Activated CD8-positive, alpha-beta memory T cell treated with anti-CD3 and anti-CD28 coated beads, Interleukin-2, amount 10 ng/mL, durations not matched to agents 7 days and 5 days (primary cell): ENCODE measurements at regions of chr1 and their contacts with region 1.

Region 1: DNA sequence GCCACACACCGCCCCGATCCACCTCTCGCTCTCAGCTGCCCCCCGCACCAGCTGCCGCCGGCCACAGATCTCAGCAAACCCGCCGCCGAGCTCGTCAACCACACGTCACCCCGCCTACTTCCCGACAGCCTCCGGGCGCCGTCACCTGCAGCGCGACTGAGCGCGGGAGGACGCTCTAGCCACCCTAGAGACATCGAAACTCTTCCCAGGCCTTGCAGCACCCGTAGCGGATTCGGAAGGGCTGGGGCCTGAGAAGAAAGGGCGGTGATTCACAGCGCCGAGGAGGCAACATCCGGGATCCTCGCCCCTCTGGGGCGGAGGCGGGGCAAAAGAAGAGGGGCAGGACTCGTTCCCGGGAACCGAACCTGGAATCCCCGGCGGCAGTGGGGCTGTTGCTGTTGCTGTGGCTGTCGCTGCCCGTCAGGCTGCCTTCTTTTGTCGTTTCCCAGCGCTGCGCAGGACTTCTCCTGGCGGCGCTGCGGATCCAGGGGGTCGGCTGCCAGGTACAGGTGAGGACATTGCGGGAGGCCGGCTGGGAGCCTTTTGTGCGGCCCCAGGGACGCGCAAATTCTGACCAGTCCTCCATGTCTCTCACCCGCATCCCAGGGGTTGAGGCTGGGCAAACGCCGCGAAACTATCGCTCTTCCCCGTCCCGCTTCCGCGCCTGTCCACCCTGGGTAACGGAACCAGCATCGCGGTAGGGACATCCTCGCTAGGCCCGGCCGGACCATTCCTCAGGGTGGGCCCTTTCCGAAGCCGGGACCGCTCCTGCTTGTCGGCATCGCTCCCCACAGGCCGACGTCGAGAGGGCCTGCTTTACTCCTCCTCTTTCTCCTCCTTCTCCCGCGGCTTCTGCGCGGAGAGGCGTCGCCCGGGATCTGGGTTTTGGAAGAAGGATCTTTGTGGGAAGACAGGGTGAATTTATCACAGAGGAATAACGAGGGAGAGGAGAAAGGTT is at the starts of genes RO60 and UCHL5:
- DNase-seq: peak; percentile 98
- ATAC-seq: peak; percentile 95
- H3K4me3 Mint-ChIP-seq: peak within 1 kb of the TSS; percentile 91
- H3K27ac Mint-ChIP-seq: peak within 1 kb of the TSS; percentile 96
- H3K4me1 Mint-ChIP-seq: peaks cover 51% of the 10 kb centered on the region
- H3K27me3 Mint-ChIP-seq: no peaks in the 10 kb centered on the region
- total RNA-seq, gene RO60: 59.0 to 59.3 TPM
- total RNA-seq, gene UCHL5: 50.8 to 68.5 TPM

Region 2: DNA sequence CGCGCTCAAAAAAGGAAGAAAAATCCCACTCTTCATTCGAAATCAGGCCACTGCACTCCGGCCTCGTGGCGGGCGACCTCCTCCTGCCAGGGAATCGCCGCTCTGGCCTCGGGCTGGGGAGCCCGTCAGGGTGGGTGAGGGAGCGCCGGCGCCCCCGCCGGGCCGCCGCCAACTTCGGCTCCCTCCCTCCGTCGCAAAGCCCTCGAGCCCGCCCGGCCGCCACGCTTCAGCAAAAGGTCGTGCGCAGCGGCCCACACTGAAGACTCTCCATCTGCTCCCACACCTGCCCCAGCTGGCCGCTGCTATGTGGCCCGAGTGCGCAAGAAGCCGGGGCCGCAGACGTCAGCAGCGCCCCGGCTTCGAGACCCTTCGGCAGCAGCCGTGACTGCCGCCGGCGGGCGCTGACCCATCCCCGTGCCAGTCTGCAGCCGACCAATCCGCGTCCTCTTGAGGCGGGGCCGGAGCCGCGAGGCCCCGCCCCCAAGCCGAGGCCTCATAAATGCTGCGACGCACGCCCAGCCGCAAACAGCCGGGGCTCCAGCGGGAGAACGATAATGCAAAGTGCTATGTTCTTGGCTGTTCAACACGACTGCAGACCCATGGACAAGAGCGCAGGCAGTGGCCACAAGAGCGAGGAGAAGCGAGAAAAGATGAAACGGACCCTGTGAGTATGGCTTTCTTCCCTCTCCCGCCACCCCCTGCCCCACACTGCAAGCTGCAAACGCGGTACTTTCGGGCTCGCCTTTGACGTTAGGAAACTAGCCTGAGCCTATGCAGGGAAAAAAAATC is 250.8 kb before region 1 on chr1 and contains the start of gene RGS2:
- CTCF ChIA-PET with region 1: interaction called, 15 read pairs
- DNase-seq: peak; percentile 91
- ATAC-seq: peak; percentile 92
- H3K4me3 Mint-ChIP-seq: peak within 1 kb of the TSS; percentile 92
- H3K27ac Mint-ChIP-seq: peak within 1 kb of the TSS; percentile 94
- H3K4me1 Mint-ChIP-seq: peaks cover 31% of the 10 kb centered on the region
- H3K27me3 Mint-ChIP-seq: no peaks in the 10 kb centered on the region
- total RNA-seq, gene RGS2: 9.7 to 10.6 TPM

Region 3: DNA sequence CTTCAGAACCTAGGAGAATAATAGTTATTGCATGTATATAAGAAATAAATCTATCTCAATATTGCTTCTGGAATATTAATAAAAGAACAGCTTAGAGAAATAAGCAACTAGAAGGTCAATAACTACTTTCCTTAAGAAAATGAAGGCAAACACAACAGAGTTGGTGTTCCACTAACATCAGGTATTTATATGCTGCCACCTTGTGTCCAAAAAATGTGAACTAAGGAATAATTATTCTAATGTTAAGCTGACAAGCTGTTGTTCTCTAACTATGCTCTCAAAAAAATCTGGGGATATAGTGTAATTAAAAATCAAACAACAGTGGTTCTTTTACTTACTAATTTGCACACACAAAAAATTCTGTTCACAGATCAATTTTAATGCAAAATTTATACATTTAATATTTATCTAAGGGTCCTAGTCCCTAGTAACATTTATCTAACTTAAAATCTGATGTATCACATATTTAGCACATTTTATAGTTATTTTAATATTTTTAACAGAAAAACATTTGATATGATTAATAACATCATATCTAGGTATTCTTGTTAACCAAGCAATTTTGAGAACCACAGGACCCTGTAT is 40.0 kb before region 1 on chr1:
- CTCF ChIA-PET with region 1: interaction called, 11 read pairs
- DNase-seq: no peak
- ATAC-seq: peak; percentile 63
- H3K4me3 Mint-ChIP-seq: no peak overlapping the region
- H3K27ac Mint-ChIP-seq: no peak overlapping the region
- H3K4me1 Mint-ChIP-seq: no peaks in the 10 kb centered on the region
- H3K27me3 Mint-ChIP-seq: no peaks in the 10 kb centered on the region

Region 4: GRCh38 chr1:193069748-193070385 is 10.3 kb after region 1 on chr1:
- CTCF ChIA-PET with region 1: interaction called, 19 read pairs
- DNase-seq: no peak
- ATAC-seq: peak; percentile 34
- H3K4me3 Mint-ChIP-seq: no peak overlapping the region
- H3K27ac Mint-ChIP-seq: peak overlapping the region; percentile 77
- H3K4me1 Mint-ChIP-seq: peaks cover 47% of the 10 kb centered on the region
- H3K27me3 Mint-ChIP-seq: no peaks in the 10 kb centered on the region

Region 5: GRCh38 chr1:193121616-193122593 is 62.4 kb after region 1 on chr1 and contains the start of gene CDC73:
- CTCF ChIA-PET with region 1: interaction called, 25 read pairs
- DNase-seq: peak; percentile 98
- ATAC-seq: peak; percentile 97
- H3K4me3 Mint-ChIP-seq: peak within 1 kb of the TSS; percentile 96
- H3K27ac Mint-ChIP-seq: peak within 1 kb of the TSS; percentile 97
- H3K4me1 Mint-ChIP-seq: peaks cover 57% of the 10 kb centered on the region
- H3K27me3 Mint-ChIP-seq: no peaks in the 10 kb centered on the region
- total RNA-seq, gene CDC73: 55.6 to 63.3 TPM